ENCODE measurements at regions of chr12 and their contacts with region 1.

Region 1: DNA sequence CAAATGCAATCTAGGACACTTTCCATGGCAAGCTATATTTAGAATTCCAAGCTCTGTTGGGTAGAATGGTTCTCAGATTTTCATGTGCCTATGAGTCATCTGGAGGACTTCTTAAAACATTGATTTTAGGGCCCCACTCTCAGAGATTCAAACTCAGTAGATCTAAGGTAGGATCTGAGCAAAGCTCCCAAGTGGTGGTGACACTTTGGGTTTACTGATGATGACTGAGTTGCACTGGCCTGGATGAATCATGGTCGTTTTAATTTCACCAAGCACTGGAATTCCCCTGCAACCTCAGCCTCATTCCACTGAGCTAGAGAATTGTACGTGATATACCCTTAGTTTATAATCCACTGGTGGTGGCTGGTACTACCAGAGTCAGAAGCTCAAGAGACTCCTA is 86.5 kb downstream of the PPM1H start:
- DNase-seq: peak; percentile 49
- H3K4me3 ChIP-seq: no peak overlapping the region
- H3K27me3 ChIP-seq: no peaks in the 10 kb centered on the region
- CTCF ChIP-seq: no peak

Region 2: GRCh38 chr12:62603061-62603810 is 245.2 kb before region 1 on chr12:
- CTCF ChIA-PET with region 1: interaction called, 3 read pairs
- POLR2A ChIA-PET with region 1: interaction called, 10 read pairs
- DNase-seq: peak; percentile 47
- H3K4me3 ChIP-seq: peak overlapping the region; percentile 69
- H3K27me3 ChIP-seq: no peaks in the 10 kb centered on the region
- CTCF ChIP-seq: peak; percentile 58

Region 3: DNA sequence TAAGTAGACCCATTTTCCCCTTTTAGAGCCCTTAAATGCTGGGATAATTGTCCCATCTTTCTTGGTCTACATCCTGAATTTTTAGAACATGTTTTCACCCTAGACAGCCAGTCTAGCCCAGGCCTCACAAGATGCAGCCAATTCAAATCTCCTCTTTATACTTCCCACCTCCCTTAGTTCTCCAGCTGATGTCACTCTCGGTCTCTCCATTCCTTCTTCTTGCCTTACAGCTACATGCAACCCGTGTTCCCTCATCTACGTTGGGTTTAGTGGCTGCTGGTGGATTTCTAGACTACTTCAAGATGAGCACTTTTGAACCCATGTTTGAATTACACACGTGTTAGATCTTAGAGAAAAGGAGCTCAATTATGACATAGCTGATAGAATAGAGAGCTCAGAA is 45.4 kb before region 1 on chr12:
- CTCF ChIA-PET with region 1: no interaction called
- POLR2A ChIA-PET with region 1: no interaction called
- DNase-seq: no peak
- H3K4me3 ChIP-seq: no peak overlapping the region
- H3K27me3 ChIP-seq: no peaks in the 10 kb centered on the region
- CTCF ChIP-seq: peak; percentile 38; the same call in 1 of the 2 replicates

Region 4: GRCh38 chr12:62859321-62859737 is 10.9 kb after region 1 on chr12:
- CTCF ChIA-PET with region 1: interaction called, 5 read pairs
- POLR2A ChIA-PET with region 1: interaction called, 24 read pairs
- DNase-seq: no peak
- H3K4me3 ChIP-seq: no peak overlapping the region
- H3K27me3 ChIP-seq: no peaks in the 10 kb centered on the region
- CTCF ChIP-seq: no peak

Region 5: DNA sequence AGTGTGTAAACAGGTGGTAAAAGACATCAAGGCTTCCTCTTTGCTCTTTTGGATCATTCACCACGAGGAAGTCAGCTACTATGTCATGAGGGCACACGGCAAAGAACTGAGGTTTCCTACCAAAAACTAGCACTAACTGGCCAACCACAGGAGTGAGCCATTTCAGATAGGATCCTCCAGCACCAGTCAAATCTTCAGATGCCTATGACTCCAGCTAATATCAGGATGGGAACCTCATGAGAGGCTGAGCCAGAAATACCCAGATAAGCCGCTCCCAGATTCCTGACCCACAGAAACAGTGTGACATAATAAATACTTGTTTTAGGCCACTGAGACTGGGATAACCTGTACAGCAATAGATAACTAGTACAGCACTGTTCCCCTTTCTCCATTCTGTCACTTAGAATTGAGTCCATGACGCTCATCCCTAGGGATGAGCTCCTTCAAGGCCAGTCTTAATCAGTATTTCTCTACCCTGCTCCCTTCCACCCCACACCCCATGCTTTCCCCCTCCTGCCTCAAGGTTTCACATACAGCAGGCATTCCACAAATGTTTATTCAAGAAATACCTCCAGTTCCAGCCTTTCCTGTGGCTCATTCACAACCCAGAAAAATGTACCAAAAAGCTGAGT is 18.1 kb after region 1 on chr12:
- CTCF ChIA-PET with region 1: interaction called, 5 read pairs
- POLR2A ChIA-PET with region 1: interaction called, 19 read pairs
- DNase-seq: peak; percentile 44
- H3K4me3 ChIP-seq: no peak overlapping the region
- H3K27me3 ChIP-seq: no peaks in the 10 kb centered on the region
- CTCF ChIP-seq: no peak

Region 6: GRCh38 chr12:63068857-63069442 is 220.5 kb after region 1 on chr12:
- CTCF ChIA-PET with region 1: interaction called, 6 read pairs
- POLR2A ChIA-PET with region 1: interaction called, 14 read pairs
- DNase-seq: no peak
- H3K4me3 ChIP-seq: no peak overlapping the region
- H3K27me3 ChIP-seq: no peaks in the 10 kb centered on the region
- CTCF ChIP-seq: peak; percentile 66

Measured in BJ (cell line).